Activated B cell treated with CpG ODN at 0.5 μM for 24 hours (primary cell): ENCODE measurements at regions of chr15 and their contacts with region 1.

Region 1: GRCh38 chr15:94306700-94307650 is 75.6 kb downstream of the MCTP2 start:
- DNase-seq: no peak
- ATAC-seq: peak; percentile 86
- H3K4me3 Mint-ChIP-seq: peak overlapping the region; percentile 66
- H3K27ac Mint-ChIP-seq: peak overlapping the region; percentile 93
- H3K4me1 Mint-ChIP-seq: peaks cover 48% of the 10 kb centered on the region
- H3K27me3 Mint-ChIP-seq: no peaks in the 10 kb centered on the region
- CTCF ChIP-seq: no peak

Region 2: GRCh38 chr15:94174399-94174802 is 132.6 kb before region 1 on chr15:
- CTCF ChIA-PET with region 1: no interaction called
- POLR2A ChIA-PET with region 1: interaction called, 6 read pairs
- intact Hi-C with region 1: loop called (anchors 1 kb)
- DNase-seq: no peak
- ATAC-seq: peak; percentile 91
- H3K4me3 Mint-ChIP-seq: peak overlapping the region; percentile 39
- H3K27ac Mint-ChIP-seq: peak overlapping the region; percentile 31
- H3K4me1 Mint-ChIP-seq: peaks cover 25% of the 10 kb centered on the region
- H3K27me3 Mint-ChIP-seq: peaks cover 19% of the 10 kb centered on the region
- CTCF ChIP-seq: no peak

Region 3: DNA sequence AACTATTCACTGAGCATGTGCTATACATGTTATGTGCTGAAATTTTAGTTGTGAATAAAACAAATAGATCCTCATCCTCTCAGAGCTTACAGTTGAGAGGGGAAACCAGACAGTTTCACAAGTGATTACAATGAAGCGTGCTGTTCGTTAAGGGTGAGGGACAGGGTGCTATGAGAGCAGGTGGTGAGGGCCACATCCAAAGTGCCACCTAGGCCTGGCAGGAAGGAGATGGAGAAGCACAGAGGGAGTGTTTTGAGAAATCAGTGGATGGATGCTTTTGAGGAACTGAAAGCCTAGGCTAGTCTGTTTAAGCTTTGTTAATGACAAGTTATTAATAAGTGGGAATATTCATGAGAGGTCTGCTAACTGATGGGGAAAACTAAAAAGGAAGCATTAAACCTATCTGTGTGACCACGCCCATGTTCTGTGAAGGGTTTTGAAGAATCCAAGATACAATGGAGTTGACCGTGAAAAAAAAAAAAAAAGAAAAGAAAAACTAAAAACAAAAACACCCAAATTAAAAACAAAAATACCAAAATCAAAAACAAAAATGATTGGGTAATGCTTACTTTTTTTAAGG is 68.3 kb before region 1 on chr15:
- CTCF ChIA-PET with region 1: interaction called, 3 read pairs
- POLR2A ChIA-PET with region 1: interaction called, 11 read pairs
- intact Hi-C with region 1: no loop called
- DNase-seq: no peak
- ATAC-seq: peak; percentile 83
- H3K4me3 Mint-ChIP-seq: peak overlapping the region; percentile 52
- H3K27ac Mint-ChIP-seq: peak overlapping the region; percentile 86
- H3K4me1 Mint-ChIP-seq: peaks cover 80% of the 10 kb centered on the region
- H3K27me3 Mint-ChIP-seq: no peaks in the 10 kb centered on the region
- CTCF ChIP-seq: no peak

Region 4: DNA sequence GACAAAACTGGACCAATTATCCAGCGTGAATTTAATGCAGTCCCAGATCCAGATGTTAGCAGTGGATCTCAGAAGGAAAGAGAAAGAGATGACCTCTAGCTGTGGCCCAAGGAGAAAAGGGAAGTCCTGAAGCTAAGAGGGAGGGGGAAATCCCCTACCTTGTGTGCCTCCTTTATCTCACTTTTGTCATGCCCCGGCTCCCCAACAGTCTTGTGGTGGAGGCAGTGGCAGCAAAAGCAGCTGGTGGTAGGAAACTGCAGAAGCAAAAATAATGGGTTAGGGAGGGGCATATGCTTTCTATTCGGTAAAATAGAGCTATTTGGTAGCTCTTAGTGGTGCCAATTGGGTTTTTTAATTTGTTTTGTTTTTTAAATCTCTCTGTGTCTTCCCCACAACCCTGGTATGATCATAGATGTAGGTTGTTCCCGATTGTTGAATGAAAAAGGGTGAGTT is 19.2 kb before region 1 on chr15:
- CTCF ChIA-PET with region 1: interaction called, 14 read pairs
- POLR2A ChIA-PET with region 1: interaction called, 48 read pairs
- intact Hi-C with region 1: loop called (anchors 1 kb)
- DNase-seq: peak; percentile 41
- ATAC-seq: peak; percentile 92
- H3K4me3 Mint-ChIP-seq: peak overlapping the region; percentile 80
- H3K27ac Mint-ChIP-seq: peak overlapping the region; percentile 92
- H3K4me1 Mint-ChIP-seq: peaks cover 89% of the 10 kb centered on the region
- H3K27me3 Mint-ChIP-seq: no peaks in the 10 kb centered on the region
- CTCF ChIP-seq: no peak